Activated naive CD4-positive, alpha-beta T cell treated with anti-CD3 and anti-CD28 coated beads, Interleukin-2, amount 10 ng/mL, durations not matched to agents 7 days and 5 days (primary cell): ENCODE measurements at regions of chr16 and their contacts with region 1.

Region 1: GRCh38 chr16:68264128-68265077 is at the start of gene SLC7A6:
- DNase-seq: peak; percentile 86
- H3K4me3 Mint-ChIP-seq: peak within 1 kb of the TSS; percentile 91
- H3K27ac Mint-ChIP-seq: peak within 1 kb of the TSS; percentile 98
- H3K4me1 Mint-ChIP-seq: peaks cover 66% of the 10 kb centered on the region
- H3K27me3 Mint-ChIP-seq: no peaks in the 10 kb centered on the region

Region 2: GRCh38 chr16:68244903-68245853 is 19.2 kb before region 1 on chr16 and contains the start of gene PLA2G15:
- CTCF ChIA-PET with region 1: interaction called, 24 read pairs
- DNase-seq: peak; percentile 97
- H3K4me3 Mint-ChIP-seq: peak within 1 kb of the TSS; percentile 96
- H3K27ac Mint-ChIP-seq: peak within 1 kb of the TSS; percentile 78
- H3K4me1 Mint-ChIP-seq: peaks cover 24% of the 10 kb centered on the region
- H3K27me3 Mint-ChIP-seq: peaks cover 26% of the 10 kb centered on the region

Region 3: DNA sequence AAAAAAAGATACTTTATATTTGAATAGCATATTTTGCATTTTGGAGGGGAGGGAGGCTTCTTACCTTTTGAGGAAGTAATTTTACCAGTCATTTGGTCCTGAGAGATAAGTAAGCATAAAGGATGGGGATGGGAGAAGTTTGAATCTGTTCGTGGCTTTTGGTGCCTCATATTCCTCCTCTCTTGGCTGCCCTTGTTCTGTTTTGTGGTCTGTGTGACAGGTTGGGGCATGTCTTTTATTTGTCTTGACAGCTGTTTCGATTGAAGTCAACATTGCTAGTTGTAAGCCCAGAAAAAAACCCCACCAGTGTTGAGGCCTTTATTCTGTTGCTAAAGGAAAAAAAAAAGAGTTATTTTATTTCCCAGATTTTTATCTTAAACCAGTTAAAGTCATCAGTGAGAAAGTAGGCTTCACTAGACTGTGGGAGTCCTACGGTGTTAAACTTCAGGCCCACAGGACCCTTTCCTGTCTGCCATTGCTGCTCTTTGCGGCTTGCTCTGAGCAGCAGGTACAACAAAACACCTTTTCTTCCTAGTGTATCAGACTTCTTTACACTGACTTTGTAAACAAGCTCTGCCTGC is 11.3 kb after region 1 on chr16:
- CTCF ChIA-PET with region 1: interaction called, 30 read pairs
- DNase-seq: peak; percentile 69
- H3K4me3 Mint-ChIP-seq: peak overlapping the region; percentile 39
- H3K27ac Mint-ChIP-seq: peak overlapping the region; percentile 91
- H3K4me1 Mint-ChIP-seq: peaks cover 77% of the 10 kb centered on the region
- H3K27me3 Mint-ChIP-seq: no peaks in the 10 kb centered on the region

Region 4: GRCh38 chr16:68289621-68290329 is 25.4 kb after region 1 on chr16:
- CTCF ChIA-PET with region 1: interaction called, 58 read pairs
- DNase-seq: peak; percentile 70
- H3K4me3 Mint-ChIP-seq: peak overlapping the region; percentile 57
- H3K27ac Mint-ChIP-seq: peak overlapping the region; percentile 86
- H3K4me1 Mint-ChIP-seq: peaks cover 84% of the 10 kb centered on the region
- H3K27me3 Mint-ChIP-seq: no peaks in the 10 kb centered on the region

Region 5: GRCh38 chr16:68310761-68311511 is 46.5 kb after region 1 on chr16 and contains the starts of genes PRMT7 and SLC7A6OS:
- CTCF ChIA-PET with region 1: interaction called, 432 read pairs
- DNase-seq: peak; percentile 96
- H3K4me3 Mint-ChIP-seq: peak within 1 kb of the TSS; percentile 86
- H3K27ac Mint-ChIP-seq: peak within 1 kb of the TSS; percentile 99
- H3K4me1 Mint-ChIP-seq: peaks cover 51% of the 10 kb centered on the region
- H3K27me3 Mint-ChIP-seq: no peaks in the 10 kb centered on the region

Region 6: GRCh38 chr16:68364561-68364998 is 100.2 kb after region 1 on chr16:
- CTCF ChIA-PET with region 1: interaction called, 10 read pairs
- DNase-seq: no peak
- H3K4me3 Mint-ChIP-seq: no peak overlapping the region
- H3K27ac Mint-ChIP-seq: no peak overlapping the region
- H3K4me1 Mint-ChIP-seq: peaks cover 45% of the 10 kb centered on the region
- H3K27me3 Mint-ChIP-seq: peaks cover 90% of the 10 kb centered on the region